Endothelial cell of umbilical vein (primary cell): ENCODE measurements at regions of chr1 and their contacts with region 1.

Region 1: DNA sequence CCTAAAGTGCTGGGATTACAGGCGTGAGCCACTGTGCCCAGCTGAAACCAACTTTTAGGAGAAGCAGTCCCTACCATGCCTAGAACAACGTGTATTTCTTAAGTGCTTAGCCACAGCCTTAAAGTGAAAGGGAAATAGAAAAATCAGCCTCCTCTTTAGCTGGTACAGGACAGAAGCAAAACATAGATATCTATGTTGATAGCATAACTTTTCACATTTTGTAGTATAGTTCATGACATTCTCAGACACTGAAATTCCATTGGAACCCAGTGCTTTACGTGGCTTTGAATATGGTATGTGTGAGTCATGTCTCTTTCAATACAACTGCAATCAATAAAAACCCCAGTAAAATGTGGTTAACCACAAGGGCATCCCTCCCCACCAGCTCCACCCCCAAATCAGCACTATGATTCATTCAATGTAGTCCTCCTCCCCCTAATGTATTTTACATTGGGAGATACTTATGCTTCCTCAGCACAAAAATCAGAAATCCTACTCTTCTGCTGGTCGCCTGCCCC is 32.1 kb downstream of the TGFB2 start:
- DNase-seq: peak; percentile 88
- H3K4me3 ChIP-seq: no peak overlapping the region
- H3K27ac ChIP-seq: peak overlapping the region; percentile 72
- H3K4me1 ChIP-seq: peaks cover 47% of the 10 kb centered on the region
- H3K27me3 ChIP-seq: no peaks in the 10 kb centered on the region
- CTCF ChIP-seq: no peak
- POLR2A ChIP-seq: peak; percentile 51

Region 2: GRCh38 chr1:218361298-218362065 is 15.7 kb before region 1 on chr1:
- CTCF ChIA-PET with region 1: interaction called, 3 read pairs
- POLR2A ChIA-PET with region 1: no interaction called
- dilution Hi-C with region 1: no loop called
- intact Hi-C with region 1: loop called (anchors 1 kb)
- DNase-seq: peak; percentile 81
- H3K4me3 ChIP-seq: no peak overlapping the region
- H3K27ac ChIP-seq: no peak overlapping the region
- H3K4me1 ChIP-seq: peaks cover 6% of the 10 kb centered on the region
- H3K27me3 ChIP-seq: no peaks in the 10 kb centered on the region
- CTCF ChIP-seq: peak; percentile 55 to 70
- POLR2A ChIP-seq: no peak

Region 3: DNA sequence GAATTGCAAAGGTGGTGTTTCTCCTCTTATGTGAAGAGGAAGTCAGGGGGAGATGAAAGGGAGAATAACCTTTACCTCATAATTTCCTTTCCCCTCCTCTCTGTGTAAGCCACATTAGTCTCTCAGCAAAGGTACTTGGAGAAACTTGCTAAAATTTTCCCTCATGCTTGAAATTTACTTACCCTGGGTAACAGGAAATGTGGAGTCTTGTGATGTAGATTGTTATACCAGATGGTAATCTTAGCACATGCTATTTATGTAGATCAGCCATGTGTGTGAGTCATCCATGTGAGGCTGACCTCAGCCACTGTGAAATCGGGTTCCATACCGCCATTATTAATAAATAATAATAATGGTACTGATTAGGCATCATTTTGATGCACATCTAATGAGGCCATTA is 96.3 kb after region 1 on chr1:
- CTCF ChIA-PET with region 1: no interaction called
- POLR2A ChIA-PET with region 1: no interaction called
- dilution Hi-C with region 1: no loop called
- intact Hi-C with region 1: loop called (anchors 1 kb)
- DNase-seq: peak; percentile 79
- H3K4me3 ChIP-seq: no peak overlapping the region
- H3K27ac ChIP-seq: peak overlapping the region; percentile 74
- H3K4me1 ChIP-seq: peaks cover 28% of the 10 kb centered on the region
- H3K27me3 ChIP-seq: no peaks in the 10 kb centered on the region
- CTCF ChIP-seq: no peak
- POLR2A ChIP-seq: peak; percentile 46

Region 4: DNA sequence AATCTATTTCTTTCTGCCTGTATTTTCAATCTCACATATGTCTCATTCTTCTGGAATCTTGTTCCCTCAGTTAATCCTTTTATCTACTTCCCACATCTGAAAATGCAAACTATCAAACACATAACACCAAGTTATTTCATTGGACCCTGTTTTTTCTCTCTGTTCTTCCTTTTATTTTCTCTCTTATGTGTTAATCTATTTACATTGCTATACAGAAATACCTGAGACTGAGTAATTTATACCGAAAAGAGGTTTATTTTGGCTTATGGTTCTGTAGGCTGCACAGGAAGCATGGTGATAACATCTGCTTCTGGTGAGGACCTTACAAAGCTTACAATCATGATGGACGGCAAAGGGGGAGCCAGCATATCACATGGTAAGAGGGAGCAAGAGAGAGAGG is 215.5 kb after region 1 on chr1:
- CTCF ChIA-PET with region 1: no interaction called
- POLR2A ChIA-PET with region 1: no interaction called
- dilution Hi-C with region 1: no loop called
- intact Hi-C with region 1: loop called (anchors 1 kb)
- DNase-seq: peak; percentile 94
- H3K4me3 ChIP-seq: peak overlapping the region in 1 of 3 experiments; percentile 7
- H3K27ac ChIP-seq: peak overlapping the region; percentile 68
- H3K4me1 ChIP-seq: peaks cover 19% of the 10 kb centered on the region
- H3K27me3 ChIP-seq: no peaks in the 10 kb centered on the region
- CTCF ChIP-seq: no peak
- POLR2A ChIP-seq: peak; percentile 42

Region 5: DNA sequence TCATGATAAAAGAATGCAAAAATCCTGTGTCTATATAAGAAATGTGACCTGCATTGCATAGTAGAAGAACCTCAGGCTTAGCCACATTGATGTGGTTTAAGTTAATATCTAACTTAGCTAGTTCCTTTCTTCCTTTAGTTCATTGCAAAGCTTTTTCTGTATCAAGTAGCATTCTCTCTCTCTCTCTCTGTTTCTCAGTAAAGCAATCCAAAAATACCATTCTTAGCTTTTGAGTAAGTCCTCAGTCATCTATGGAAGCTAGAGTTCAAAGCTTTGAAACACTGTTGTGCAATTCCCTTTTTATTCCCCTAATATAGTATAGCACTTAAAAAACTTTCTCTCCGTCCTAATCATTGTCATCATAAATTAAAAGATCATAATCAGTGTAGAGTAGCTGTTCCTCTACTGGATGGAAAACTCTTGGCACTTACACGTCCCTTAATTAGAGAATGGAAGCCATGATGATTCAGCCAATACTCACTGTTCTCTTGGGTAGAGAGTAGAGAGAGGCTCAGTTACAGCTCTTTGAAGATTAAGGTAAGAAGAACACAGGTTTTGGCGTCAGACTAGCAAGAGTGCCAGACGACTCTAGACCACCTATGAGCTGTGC is 446.2 kb after region 1 on chr1:
- CTCF ChIA-PET with region 1: no interaction called
- POLR2A ChIA-PET with region 1: no interaction called
- dilution Hi-C with region 1: no loop called
- intact Hi-C with region 1: no loop called
- DNase-seq: no peak
- H3K4me3 ChIP-seq: no peak overlapping the region
- H3K27ac ChIP-seq: no peak overlapping the region
- H3K4me1 ChIP-seq: no peaks in the 10 kb centered on the region
- H3K27me3 ChIP-seq: no peaks in the 10 kb centered on the region
- CTCF ChIP-seq: no peak
- POLR2A ChIP-seq: no peak

Region 6: GRCh38 chr1:219304227-219305226 is 927.3 kb after region 1 on chr1:
- CTCF ChIA-PET with region 1: no interaction called
- POLR2A ChIA-PET with region 1: no interaction called
- dilution Hi-C with region 1: no loop called
- intact Hi-C with region 1: loop called (anchors 5 kb)
- DNase-seq: peak; percentile 86
- H3K4me3 ChIP-seq: no peak overlapping the region
- H3K27ac ChIP-seq: peak overlapping the region; percentile 94
- H3K4me1 ChIP-seq: peaks cover 35% of the 10 kb centered on the region
- H3K27me3 ChIP-seq: no peaks in the 10 kb centered on the region
- CTCF ChIP-seq: peak in 1 of 2 donors; percentile 4
- POLR2A ChIP-seq: no peak